GM12878 (cell line): ENCODE measurements at regions of chr15 and their contacts with region 1.

Region 1: DNA sequence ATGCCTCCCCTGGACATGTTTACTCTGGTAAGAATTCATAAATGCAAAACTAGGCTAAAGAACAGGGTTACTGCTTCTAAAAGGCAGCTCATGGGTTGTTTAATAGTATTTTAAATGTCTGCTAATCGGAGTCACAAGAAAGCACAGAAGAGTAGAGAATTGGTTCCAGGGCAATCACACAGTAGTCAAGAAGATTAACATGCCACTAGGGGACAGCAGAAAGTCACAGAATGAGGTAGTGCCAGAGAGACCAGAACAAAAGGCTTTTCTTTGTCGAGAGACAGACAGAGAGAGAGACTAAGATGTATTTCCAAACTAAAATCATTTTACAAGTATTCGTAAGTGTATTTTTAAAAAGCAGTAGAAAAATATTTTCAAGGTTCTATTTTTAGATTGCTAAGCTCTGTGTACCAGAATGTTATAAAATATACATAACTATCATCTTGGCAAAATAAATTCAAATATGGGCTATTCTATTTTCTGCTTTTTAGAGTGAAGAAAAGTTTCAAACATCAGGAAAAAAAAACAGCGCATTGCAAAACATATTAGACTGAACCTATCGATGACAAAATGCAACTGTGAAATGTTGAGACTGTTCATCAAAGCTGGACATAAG is 78.3 kb upstream of the CDIN1 start:
- DNase-seq: peak; percentile 19
- ATAC-seq: peak; percentile 99
- H3K4me3 ChIP-seq: no peak overlapping the region
- H3K27ac ChIP-seq: no peak overlapping the region
- H3K4me1 ChIP-seq: no peaks in the 10 kb centered on the region
- H3K27me3 ChIP-seq: no peaks in the 10 kb centered on the region
- CTCF ChIP-seq: peak; percentile 84 to 95 (median 88)
- EP300 ChIP-seq: no peak
- POLR2A ChIP-seq: no peak
- RAD21 ChIP-seq: peak; percentile 96

Region 2: GRCh38 chr15:35751413-35752133 is 749.6 kb before region 1 on chr15:
- CTCF ChIA-PET with region 1: interaction called, 14 read pairs
- POLR2A ChIA-PET with region 1: no interaction called
- RAD21 ChIA-PET with region 1: interaction called, 3 read pairs
- SMC1A ChIA-PET with region 1: interaction called, 6 read pairs
- in situ Hi-C with region 1: no loop called
- intact Hi-C with region 1: loop called (anchors 10 kb)
- DNase-seq: peak; percentile 12
- ATAC-seq: peak; percentile 88
- H3K4me3 ChIP-seq: no peak overlapping the region
- H3K27ac ChIP-seq: no peak overlapping the region
- H3K4me1 ChIP-seq: no peaks in the 10 kb centered on the region
- H3K27me3 ChIP-seq: no peaks in the 10 kb centered on the region
- CTCF ChIP-seq: peak; percentile 62 to 75 (median 71); a peak in 5 of 6 replicates
- EP300 ChIP-seq: no peak
- POLR2A ChIP-seq: no peak
- RAD21 ChIP-seq: peak; percentile 73

Region 3: GRCh38 chr15:36426691-36427090 is 74.5 kb before region 1 on chr15:
- CTCF ChIA-PET with region 1: no interaction called
- POLR2A ChIA-PET with region 1: no interaction called
- RAD21 ChIA-PET with region 1: no interaction called
- SMC1A ChIA-PET with region 1: no interaction called
- in situ Hi-C with region 1: no loop called
- intact Hi-C with region 1: no loop called
- DNase-seq: no peak
- ATAC-seq: no peak
- H3K4me3 ChIP-seq: no peak overlapping the region
- H3K27ac ChIP-seq: no peak overlapping the region
- H3K4me1 ChIP-seq: no peaks in the 10 kb centered on the region
- H3K27me3 ChIP-seq: no peaks in the 10 kb centered on the region
- CTCF ChIP-seq: no peak
- EP300 ChIP-seq: no peak
- POLR2A ChIP-seq: no peak
- RAD21 ChIP-seq: no peak

Region 4: GRCh38 chr15:36517758-36518157 is 16.6 kb after region 1 on chr15:
- CTCF ChIA-PET with region 1: interaction called, 23 read pairs
- POLR2A ChIA-PET with region 1: no interaction called
- RAD21 ChIA-PET with region 1: no interaction called
- SMC1A ChIA-PET with region 1: interaction called, 7 read pairs
- in situ Hi-C with region 1: no loop called
- intact Hi-C with region 1: loop called (anchors 2 kb)
- DNase-seq: no peak
- ATAC-seq: peak; percentile 80
- H3K4me3 ChIP-seq: no peak overlapping the region
- H3K27ac ChIP-seq: no peak overlapping the region
- H3K4me1 ChIP-seq: no peaks in the 10 kb centered on the region
- H3K27me3 ChIP-seq: no peaks in the 10 kb centered on the region
- CTCF ChIP-seq: no peak
- EP300 ChIP-seq: no peak
- POLR2A ChIP-seq: no peak
- RAD21 ChIP-seq: no peak

Region 5: DNA sequence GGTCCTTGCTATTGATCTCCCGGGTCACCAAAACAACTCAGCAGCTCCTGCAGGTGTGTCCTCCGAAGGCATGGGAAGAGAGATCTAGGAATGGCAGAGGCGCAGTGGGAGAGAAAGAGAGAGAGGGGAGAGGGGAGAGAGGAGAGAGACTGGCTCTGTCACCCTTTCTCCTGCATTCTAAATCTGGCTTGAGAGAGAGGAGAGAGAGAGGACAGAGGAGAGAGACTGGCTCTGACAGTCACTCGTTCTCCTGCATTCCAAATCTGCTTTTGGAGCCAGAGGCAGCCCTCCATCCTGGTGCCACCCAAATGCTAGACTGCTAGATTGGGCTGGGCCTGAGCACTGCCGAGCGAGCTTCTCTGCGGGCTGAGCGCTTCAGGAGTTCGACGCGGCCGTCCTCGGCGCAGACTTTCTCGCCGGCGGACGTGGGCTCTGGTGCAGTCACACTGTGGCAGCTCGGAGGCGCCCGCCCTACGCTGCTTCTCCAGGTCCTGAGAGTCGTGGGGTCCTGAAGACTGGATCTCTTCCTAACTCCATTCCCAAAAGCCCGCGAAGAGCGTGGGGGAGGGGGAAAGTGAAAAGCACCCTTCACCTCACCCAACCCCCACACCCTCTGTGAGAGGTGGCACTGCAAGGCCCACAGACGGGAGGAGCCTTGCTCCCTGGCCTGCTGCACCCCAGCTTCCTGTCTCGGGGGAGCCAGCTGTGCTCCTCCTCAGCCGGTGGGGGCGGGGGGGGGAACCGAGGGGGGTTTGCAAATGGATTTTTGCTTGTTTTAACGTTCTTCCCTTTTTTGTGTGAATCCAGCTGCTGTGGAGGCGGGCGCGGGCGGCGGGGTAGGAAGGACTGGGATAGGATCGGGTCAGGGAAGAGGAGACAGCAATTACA is 376.9 kb after region 1 on chr15:
- CTCF ChIA-PET with region 1: interaction called, 12 read pairs
- POLR2A ChIA-PET with region 1: no interaction called
- RAD21 ChIA-PET with region 1: interaction called, 9 read pairs
- SMC1A ChIA-PET with region 1: interaction called, 19 read pairs
- in situ Hi-C with region 1: no loop called
- intact Hi-C with region 1: loop called (anchors 2 kb)
- DNase-seq: no peak
- ATAC-seq: peak; percentile 71
- H3K4me3 ChIP-seq: peak overlapping the region; percentile 37; the same call in 1 of the 2 replicates
- H3K27ac ChIP-seq: no peak overlapping the region
- H3K4me1 ChIP-seq: 0 out of 2 replicates have a peak, but pooled peaks cover 4% of the 10 kb centered on the region
- H3K27me3 ChIP-seq: peaks cover 9 to 29% of the 10 kb centered on the region in 2 experiments
- CTCF ChIP-seq: no peak
- EP300 ChIP-seq: no peak
- POLR2A ChIP-seq: no peak
- RAD21 ChIP-seq: no peak

Region 6: DNA sequence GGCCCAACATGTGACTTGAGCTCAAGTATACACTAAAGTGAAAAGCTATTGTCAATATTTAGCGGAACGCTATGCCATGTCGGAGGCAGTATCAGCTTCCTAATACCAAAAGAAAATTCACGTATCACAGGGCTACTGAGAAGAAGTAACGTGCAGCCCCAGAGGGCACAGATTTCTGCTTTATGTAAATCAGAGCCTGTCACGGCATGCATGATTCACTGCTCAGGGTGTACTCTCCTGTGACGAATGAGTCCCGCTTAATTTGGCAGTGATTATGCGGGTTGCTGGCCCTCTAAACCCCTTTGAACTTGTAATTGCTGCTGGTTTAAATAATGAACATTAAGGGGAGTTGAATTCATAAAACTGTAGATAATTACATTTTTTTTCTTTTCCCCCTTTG is 513.9 kb after region 1 on chr15:
- CTCF ChIA-PET with region 1: no interaction called
- POLR2A ChIA-PET with region 1: no interaction called
- RAD21 ChIA-PET with region 1: no interaction called
- SMC1A ChIA-PET with region 1: no interaction called
- in situ Hi-C with region 1: no loop called
- intact Hi-C with region 1: loop called (anchors 5 kb)
- DNase-seq: no peak
- ATAC-seq: peak; percentile 84
- H3K4me3 ChIP-seq: no peak overlapping the region
- H3K27ac ChIP-seq: no peak overlapping the region
- H3K4me1 ChIP-seq: peaks cover 17% of the 10 kb centered on the region
- H3K27me3 ChIP-seq: no peaks in the 10 kb centered on the region
- CTCF ChIP-seq: no peak
- EP300 ChIP-seq: peak; percentile 63 to 71; a peak in 2 of 4 replicates
- POLR2A ChIP-seq: no peak
- RAD21 ChIP-seq: no peak

Region 7: DNA sequence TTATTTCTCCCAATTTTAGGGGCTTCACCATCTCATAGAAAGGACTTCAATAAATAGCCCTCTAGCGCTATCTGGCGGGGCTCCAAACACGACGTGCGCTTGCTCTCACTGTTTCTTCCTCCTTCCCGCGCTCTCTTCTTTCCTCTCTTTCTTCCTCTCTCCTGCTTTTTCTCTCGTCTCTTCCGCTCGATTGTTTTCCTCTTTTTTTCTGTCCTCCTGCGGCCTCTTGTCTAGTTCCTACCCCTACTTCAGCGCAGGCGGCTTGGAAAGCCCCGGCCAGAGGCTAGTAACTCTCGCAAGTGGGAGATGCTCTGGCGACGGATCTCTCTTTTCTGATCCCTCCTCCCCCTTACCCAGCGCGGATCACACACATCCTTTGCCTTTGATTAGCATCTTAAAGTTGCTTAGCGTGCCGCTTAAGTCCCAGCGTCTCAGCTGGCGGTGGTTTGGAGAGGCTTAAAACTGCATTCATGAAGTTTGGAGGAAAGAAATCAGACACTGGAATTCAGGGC is 605.4 kb after region 1 on chr15:
- CTCF ChIA-PET with region 1: interaction called, 6 read pairs
- POLR2A ChIA-PET with region 1: no interaction called
- RAD21 ChIA-PET with region 1: interaction called, 3 read pairs
- SMC1A ChIA-PET with region 1: interaction called, 9 read pairs
- in situ Hi-C with region 1: loop called (anchors 10 kb)
- intact Hi-C with region 1: loop called (anchors 2 kb)
- DNase-seq: no peak
- ATAC-seq: peak; percentile 42; the same call in 2 of the 3 replicates
- H3K4me3 ChIP-seq: no peak overlapping the region
- H3K27ac ChIP-seq: no peak overlapping the region
- H3K4me1 ChIP-seq: no peaks in the 10 kb centered on the region; the same call in 1 of the 2 replicates
- H3K27me3 ChIP-seq: peaks cover 3 to 33% of the 10 kb centered on the region in 2 experiments
- CTCF ChIP-seq: peak; percentile 54 to 78 (median 55)
- EP300 ChIP-seq: no peak
- POLR2A ChIP-seq: no peak
- RAD21 ChIP-seq: peak; percentile 74

Region 8: GRCh38 chr15:37891766-37892368 is 1390.7 kb after region 1 on chr15:
- CTCF ChIA-PET with region 1: interaction called, 4 read pairs
- POLR2A ChIA-PET with region 1: no interaction called
- RAD21 ChIA-PET with region 1: no interaction called
- SMC1A ChIA-PET with region 1: no interaction called
- in situ Hi-C with region 1: loop called (anchors 25 kb)
- intact Hi-C with region 1: no loop called
- DNase-seq: no peak
- ATAC-seq: peak; percentile 75
- H3K4me3 ChIP-seq: no peak overlapping the region
- H3K27ac ChIP-seq: no peak overlapping the region
- H3K4me1 ChIP-seq: no peaks in the 10 kb centered on the region
- H3K27me3 ChIP-seq: no peaks in the 10 kb centered on the region
- CTCF ChIP-seq: peak; percentile 72 to 76 (median 75)
- EP300 ChIP-seq: no peak
- POLR2A ChIP-seq: no peak
- RAD21 ChIP-seq: peak; percentile 73